ENCODE measurements at regions of chr2 and their contacts with region 1.

Region 1: DNA sequence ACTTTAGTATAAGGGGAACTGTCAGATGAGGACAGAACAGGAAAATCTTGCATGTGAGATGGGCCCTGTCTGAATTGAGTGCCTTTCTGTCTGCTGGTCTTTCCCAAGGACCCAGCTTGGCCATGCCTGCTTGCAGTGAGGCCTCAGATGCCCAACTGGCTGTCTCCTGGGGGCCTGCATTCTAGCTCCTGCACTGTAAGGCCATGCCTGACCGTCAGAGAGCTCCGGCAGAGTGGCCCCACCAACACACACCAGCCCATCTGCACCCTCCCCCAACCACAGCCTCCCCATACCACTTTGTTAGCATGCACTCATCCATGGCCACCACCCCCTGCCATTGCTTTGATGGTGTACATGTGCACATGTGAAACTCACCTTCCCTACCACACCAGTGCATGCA is 190.4 kb upstream of the RPRM start:
- DNase-seq: no peak
- H3K4me3 ChIP-seq: no peak overlapping the region
- H3K27ac ChIP-seq: no peak overlapping the region
- H3K4me1 ChIP-seq: no peaks in the 10 kb centered on the region
- CTCF ChIP-seq: no peak

Region 2: GRCh38 chr2:152263911-152264310 is 1405.0 kb before region 1 on chr2:
- CTCF ChIA-PET with region 1: no interaction called
- POLR2A ChIA-PET with region 1: no interaction called
- intact Hi-C with region 1: no loop called
- DNase-seq: no peak
- H3K4me3 ChIP-seq: no peak overlapping the region
- H3K27ac ChIP-seq: no peak overlapping the region
- H3K4me1 ChIP-seq: no peaks in the 10 kb centered on the region
- CTCF ChIP-seq: no peak

Region 3: GRCh38 chr2:154370873-154371272 is 702.0 kb after region 1 on chr2:
- CTCF ChIA-PET with region 1: no interaction called
- POLR2A ChIA-PET with region 1: no interaction called
- intact Hi-C with region 1: loop called (anchors 5 kb)
- DNase-seq: no peak
- H3K4me3 ChIP-seq: no peak overlapping the region
- H3K27ac ChIP-seq: no peak overlapping the region
- H3K4me1 ChIP-seq: no peaks in the 10 kb centered on the region
- CTCF ChIP-seq: no peak